ENCODE measurements at regions of chr12 and their contacts with region 1.

Region 1: GRCh38 chr12:3135522-3136461 is 58.6 kb downstream of the TSPAN9 start:
- DNase-seq: peak; percentile 26 to 46
- ATAC-seq: peak; percentile 75 to 79
- H3K4me3 ChIP-seq: no peak overlapping the region
- H3K27ac ChIP-seq: no peak overlapping the region
- H3K4me1 ChIP-seq: peaks cover 10 to 27% of the 10 kb centered on the region in 2 donors
- H3K27me3 ChIP-seq: no peaks in the 10 kb centered on the region
- CTCF ChIP-seq: peak; percentile 79 to 93 (median 88)
- POLR2A ChIP-seq: no peak

Region 2: GRCh38 chr12:3073438-3074250 is 62.1 kb before region 1 on chr12:
- in situ Hi-C with region 1: loop called in 2 of 4 experiments (anchors 10 kb)
- intact Hi-C with region 1: no loop called
- DNase-seq: peak; percentile 54 to 78
- ATAC-seq: peak; percentile 41 to 57
- H3K4me3 ChIP-seq: no peak overlapping the region
- H3K27ac ChIP-seq: peak overlapping the region in 1 of 4 donors; percentile 33
- H3K4me1 ChIP-seq: peaks cover 13 to 28% of the 10 kb centered on the region in 2 donors
- H3K27me3 ChIP-seq: no peaks in the 10 kb centered on the region
- CTCF ChIP-seq: peak; percentile 87 to 99 (median 88)
- POLR2A ChIP-seq: no peak

Region 3: DNA sequence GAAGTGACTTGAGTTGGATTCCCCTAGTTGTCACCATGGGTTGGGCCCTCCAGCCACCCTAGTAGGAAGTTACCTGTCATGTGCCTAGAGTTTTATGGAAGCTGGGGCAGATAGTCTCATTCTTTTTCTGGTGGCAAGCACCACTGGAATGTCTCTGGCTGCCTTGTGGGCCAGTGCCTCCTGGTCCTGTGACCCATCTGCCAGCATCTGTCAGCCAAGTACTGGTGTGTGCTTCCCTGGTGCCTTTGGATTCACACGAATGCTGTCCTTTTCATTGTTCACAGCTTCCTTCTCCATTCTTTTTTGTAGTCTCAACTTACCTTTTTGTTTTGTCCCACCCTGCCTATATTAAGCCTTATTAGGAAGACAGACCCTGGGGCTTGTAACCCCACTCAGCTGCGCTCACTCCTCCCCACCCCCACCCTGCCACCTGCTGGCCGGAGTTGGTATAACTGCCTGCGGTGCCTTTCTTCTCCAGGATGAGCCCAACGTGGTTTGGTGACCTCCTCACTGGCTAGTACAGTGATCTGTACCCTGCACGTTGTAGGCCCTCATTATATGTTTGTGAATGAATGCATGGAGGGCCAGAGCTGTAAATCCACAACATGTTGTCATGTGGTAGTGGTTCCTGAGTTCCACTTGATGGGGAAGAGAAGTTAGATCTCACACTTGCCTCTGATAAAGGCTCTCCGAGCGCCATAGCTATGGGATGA is 67.1 kb after region 1 on chr12:
- in situ Hi-C with region 1: loop called in 1 of 4 experiments (anchors 10 kb)
- intact Hi-C with region 1: loop called (anchors 2 kb)
- DNase-seq: peak in 1 of 2 donors; percentile 42
- ATAC-seq: peak; percentile 41 to 73
- H3K4me3 ChIP-seq: no peak overlapping the region
- H3K27ac ChIP-seq: no peak overlapping the region
- H3K4me1 ChIP-seq: peaks cover 47 to 48% of the 10 kb centered on the region in 2 donors
- H3K27me3 ChIP-seq: no peaks in the 10 kb centered on the region
- CTCF ChIP-seq: peak; percentile 85 to 95 (median 92)
- POLR2A ChIP-seq: no peak

Region 4: DNA sequence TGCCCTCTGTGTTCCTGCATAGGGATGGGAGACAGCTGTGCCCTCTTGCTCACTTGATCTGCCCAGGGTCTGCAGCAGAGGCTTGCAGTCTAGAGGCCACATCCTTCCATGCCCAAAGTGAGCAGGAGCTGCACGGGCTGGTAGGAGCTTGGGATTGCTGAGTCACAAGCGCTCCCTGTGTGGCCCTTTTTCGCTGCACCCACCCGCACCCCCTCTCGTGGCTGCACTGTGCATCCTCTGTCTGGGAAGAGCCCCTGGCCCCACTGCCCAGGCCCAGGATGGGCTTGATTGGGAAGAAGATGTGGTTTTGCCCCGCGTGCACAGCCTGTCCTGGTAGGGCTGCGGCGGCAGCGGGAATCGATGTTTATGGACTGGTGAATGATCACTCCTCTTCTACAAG is 133.8 kb after region 1 on chr12:
- in situ Hi-C with region 1: loop called in 3 of 4 experiments (anchors 5 kb)
- intact Hi-C with region 1: no loop called
- DNase-seq: no peak
- ATAC-seq: no peak
- H3K4me3 ChIP-seq: no peak overlapping the region
- H3K27ac ChIP-seq: no peak overlapping the region
- H3K4me1 ChIP-seq: peaks cover under 1 to 3% of the 10 kb centered on the region in 2 donors
- H3K27me3 ChIP-seq: no peaks in the 10 kb centered on the region
- CTCF ChIP-seq: no peak
- POLR2A ChIP-seq: no peak

Region 5: GRCh38 chr12:3275171-3276041 is 139.6 kb after region 1 on chr12:
- in situ Hi-C with region 1: loop called in 2 of 4 experiments (anchors 5 kb)
- intact Hi-C with region 1: loop called (anchors 1 kb)
- DNase-seq: peak; percentile 47 to 64
- ATAC-seq: peak; percentile 76 to 83
- H3K4me3 ChIP-seq: no peak overlapping the region
- H3K27ac ChIP-seq: no peak overlapping the region
- H3K4me1 ChIP-seq: peaks cover 8 to 9% of the 10 kb centered on the region in 2 donors
- H3K27me3 ChIP-seq: no peaks in the 10 kb centered on the region
- CTCF ChIP-seq: peak; percentile 90 to 100 (median 97)
- POLR2A ChIP-seq: no peak

Region 6: GRCh38 chr12:3777206-3777809 is 641.5 kb after region 1 on chr12:
- in situ Hi-C with region 1: loop called in 1 of 4 experiments (anchors 25 kb)
- intact Hi-C with region 1: no loop called
- DNase-seq: no peak
- ATAC-seq: peak; percentile 83 to 85
- H3K4me3 ChIP-seq: no peak overlapping the region
- H3K27ac ChIP-seq: no peak overlapping the region
- H3K4me1 ChIP-seq: peaks cover 0 to 4% of the 10 kb centered on the region in 2 donors
- H3K27me3 ChIP-seq: no peaks in the 10 kb centered on the region
- CTCF ChIP-seq: peak; percentile 44 to 71 (median 56)
- POLR2A ChIP-seq: no peak